ENCODE measurements at regions of chr19 and their contacts with region 1.

Region 1: DNA sequence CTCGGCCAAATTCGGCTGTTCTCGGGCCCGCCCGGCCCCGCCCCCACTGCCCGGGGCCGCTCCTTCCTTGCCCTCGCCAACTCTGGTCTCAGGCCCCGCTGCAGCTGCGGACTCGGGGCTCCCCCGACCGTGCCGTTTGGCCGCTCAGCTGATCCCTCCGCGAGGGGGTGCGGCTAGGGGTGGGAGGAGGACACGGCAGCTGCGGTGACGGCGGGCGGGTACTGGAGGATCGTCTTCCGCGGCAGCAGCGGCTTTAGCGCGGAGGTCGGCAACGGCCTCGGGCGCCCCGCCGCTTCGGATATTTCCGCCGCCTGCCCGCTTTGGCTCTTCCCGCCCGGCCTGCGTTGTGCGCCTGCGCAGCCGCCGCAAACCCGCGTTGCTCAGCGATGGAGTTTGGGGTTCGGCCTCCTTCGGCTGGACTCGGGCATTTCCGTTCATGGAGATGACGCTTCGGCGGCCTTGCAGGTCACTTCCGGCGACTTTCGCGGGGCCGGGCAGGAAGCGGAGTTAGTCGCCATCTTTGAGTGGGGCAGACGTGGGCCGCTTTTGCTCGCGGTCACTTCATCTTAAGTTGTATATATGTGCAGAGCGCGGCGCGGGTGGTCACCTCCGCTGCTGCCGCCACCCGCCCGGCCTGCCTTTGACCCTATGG is 338 bp upstream of the UBE2M start:
- DNase-seq: peak; percentile 100
- H3K4me3 Mint-ChIP-seq: peak overlapping the region; percentile 98
- H3K27ac Mint-ChIP-seq: peak overlapping the region; percentile 100
- H3K4me1 Mint-ChIP-seq: peaks cover 81% of the 10 kb centered on the region
- H3K27me3 Mint-ChIP-seq: no peaks in the 10 kb centered on the region

Region 2: GRCh38 chr19:58572818-58573657 is 14.3 kb after region 1 on chr19 and contains the start of gene MZF1:
- CTCF ChIA-PET with region 1: interaction called, 5 read pairs
- POLR2A ChIA-PET with region 1: interaction called, 46 read pairs
- DNase-seq: peak; percentile 100
- H3K4me3 Mint-ChIP-seq: peak within 1 kb of the TSS; percentile 83
- H3K27ac Mint-ChIP-seq: peak within 1 kb of the TSS; percentile 97
- H3K4me1 Mint-ChIP-seq: peaks cover 52% of the 10 kb centered on the region
- H3K27me3 Mint-ChIP-seq: no peaks in the 10 kb centered on the region
- total RNA-seq, gene MZF1: 21.6 to 22.9 TPM

Measured in activated CD4-positive, alpha-beta memory T cell treated with anti-CD3 and anti-CD28 coated beads, Interleukin-2, amount 10 ng/mL, durations not matched to agents 7 days and 5 days (primary cell).